ENCODE measurements at regions of chr5 and their contacts with region 1.

Region 1: DNA sequence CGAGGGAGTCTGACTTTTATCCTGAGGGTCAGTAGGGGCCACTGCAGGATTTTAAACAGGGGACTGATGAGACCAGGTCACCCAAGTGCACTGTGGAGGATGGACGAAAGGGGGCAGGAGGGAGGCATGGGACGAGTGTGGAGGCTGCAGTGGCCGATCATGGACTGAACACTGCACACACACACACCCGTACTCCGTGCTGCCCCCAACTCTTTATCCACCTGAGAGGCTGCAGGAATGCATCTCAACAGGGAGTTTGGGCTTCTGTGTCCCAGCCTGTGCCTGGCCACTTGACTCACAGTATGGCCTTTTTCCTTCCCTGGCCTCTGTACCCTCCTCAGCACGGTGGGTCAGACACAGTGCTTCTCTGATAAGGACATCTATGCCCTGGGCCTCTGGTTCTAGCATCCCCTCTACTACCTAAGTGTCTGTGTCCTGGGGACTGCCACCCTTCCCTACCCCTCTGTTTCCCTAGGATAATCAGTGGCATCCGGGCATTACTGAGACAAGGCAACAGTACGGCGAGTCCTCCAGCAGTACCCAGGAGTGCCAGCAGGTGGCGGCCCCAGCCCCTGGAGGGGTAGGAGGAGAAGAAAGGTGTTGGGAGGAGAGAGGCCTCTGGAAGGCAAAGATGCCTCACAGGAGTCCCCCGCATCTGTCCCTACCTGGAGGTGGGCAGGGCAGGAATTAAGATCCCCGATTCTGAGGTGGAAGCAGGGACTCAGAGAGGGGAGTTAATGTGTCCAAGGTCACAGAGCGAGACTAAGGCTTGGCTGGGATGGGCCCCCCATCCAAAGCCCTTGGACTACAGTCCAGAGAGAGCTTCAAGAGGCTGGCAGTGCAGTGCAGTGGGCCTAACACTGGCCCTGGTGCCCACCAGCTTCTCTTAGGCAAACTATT is 5.1 kb upstream of the CDX1 start:
- DNase-seq: peak; percentile 58 to 85
- H3K4me3 ChIP-seq: no peak overlapping the region
- H3K27ac ChIP-seq: peak overlapping the region; percentile 45 to 93
- H3K4me1 ChIP-seq: no peaks in the 10 kb centered on the region
- H3K27me3 ChIP-seq: peaks cover 0 to under 1% of the 10 kb centered on the region in 2 donors
- CTCF ChIP-seq: peak; percentile 85 to 91 (median 86)
- POLR2A ChIP-seq: no peak

Region 2: GRCh38 chr5:149172261-149172660 is 989.2 kb before region 1 on chr5:
- intact Hi-C with region 1: no loop called
- DNase-seq: no peak
- H3K4me3 ChIP-seq: no peak overlapping the region
- H3K27ac ChIP-seq: peak overlapping the region in 1 of 2 donors; percentile 7
- H3K4me1 ChIP-seq: no peaks in the 10 kb centered on the region
- H3K27me3 ChIP-seq: no peaks in the 10 kb centered on the region
- CTCF ChIP-seq: no peak
- POLR2A ChIP-seq: no peak

Region 3: GRCh38 chr5:149895416-149896345 is 265.8 kb before region 1 on chr5:
- intact Hi-C with region 1: no loop called
- DNase-seq: no peak
- H3K4me3 ChIP-seq: no peak overlapping the region
- H3K27ac ChIP-seq: no peak overlapping the region
- H3K4me1 ChIP-seq: no peaks in the 10 kb centered on the region
- H3K27me3 ChIP-seq: no peaks in the 10 kb centered on the region
- CTCF ChIP-seq: no peak
- POLR2A ChIP-seq: no peak

Region 4: GRCh38 chr5:150217873-150218692 is 56.6 kb after region 1 on chr5:
- intact Hi-C with region 1: loop called (anchors 10 kb)
- DNase-seq: peak; percentile 66 to 80
- H3K4me3 ChIP-seq: no peak overlapping the region
- H3K27ac ChIP-seq: no peak overlapping the region
- H3K4me1 ChIP-seq: no peaks in the 10 kb centered on the region
- H3K27me3 ChIP-seq: no peaks in the 10 kb centered on the region
- CTCF ChIP-seq: peak; percentile 77 to 95 (median 94)
- POLR2A ChIP-seq: no peak